ENCODE measurements at regions of chr9 and their contacts with region 1.

Region 1: DNA sequence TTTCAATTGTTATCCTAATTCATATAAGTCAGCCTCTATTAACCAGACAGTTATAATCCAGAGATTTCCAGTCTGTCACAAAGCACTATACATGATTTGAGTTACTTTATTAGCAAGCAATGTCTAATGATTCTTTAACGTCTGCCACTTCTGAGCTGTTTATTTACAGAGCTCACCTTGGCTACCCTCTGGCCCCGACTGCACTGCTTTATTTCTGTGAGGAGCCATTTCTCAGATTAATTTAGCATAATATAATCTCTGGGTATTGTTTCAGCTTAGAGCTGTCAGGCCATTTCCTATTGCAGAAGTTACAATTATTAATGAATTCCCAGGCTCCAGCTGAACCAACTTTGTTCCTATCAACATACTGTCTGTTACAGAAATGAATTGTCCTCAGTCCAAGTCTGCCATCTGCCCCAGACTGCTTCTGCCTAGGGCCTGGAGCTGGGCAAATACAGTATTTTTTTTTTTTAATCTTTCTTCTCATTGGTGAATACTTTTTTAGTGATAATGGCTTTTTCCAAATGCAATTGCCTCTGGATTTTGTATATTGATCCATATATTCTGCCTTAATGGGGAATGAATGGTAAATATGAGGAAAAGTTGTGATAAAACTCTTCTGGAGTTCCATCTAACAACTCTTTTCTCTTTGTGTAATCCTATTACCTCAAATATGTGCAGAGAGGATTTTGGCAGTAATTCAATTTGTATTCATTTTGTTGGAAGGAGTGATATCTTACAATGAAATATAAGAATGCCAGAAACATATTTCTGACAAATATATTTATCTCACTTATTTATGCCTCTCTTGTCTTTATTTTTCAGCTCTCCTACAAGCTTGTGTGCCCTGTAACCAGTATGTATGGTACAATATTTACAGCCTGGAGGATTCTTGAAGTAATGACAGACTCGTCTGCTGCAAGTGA is 104.7 kb downstream of the FOCAD start:
- DNase-seq: peak in 1 of 7 donors; percentile 8
- H3K4me3 ChIP-seq: no peak overlapping the region
- H3K27ac ChIP-seq: no peak overlapping the region
- H3K4me1 ChIP-seq: no peaks in the 10 kb centered on the region
- H3K27me3 ChIP-seq: no peaks in the 10 kb centered on the region
- CTCF ChIP-seq: no peak
- POLR2A ChIP-seq: no peak

Region 2: DNA sequence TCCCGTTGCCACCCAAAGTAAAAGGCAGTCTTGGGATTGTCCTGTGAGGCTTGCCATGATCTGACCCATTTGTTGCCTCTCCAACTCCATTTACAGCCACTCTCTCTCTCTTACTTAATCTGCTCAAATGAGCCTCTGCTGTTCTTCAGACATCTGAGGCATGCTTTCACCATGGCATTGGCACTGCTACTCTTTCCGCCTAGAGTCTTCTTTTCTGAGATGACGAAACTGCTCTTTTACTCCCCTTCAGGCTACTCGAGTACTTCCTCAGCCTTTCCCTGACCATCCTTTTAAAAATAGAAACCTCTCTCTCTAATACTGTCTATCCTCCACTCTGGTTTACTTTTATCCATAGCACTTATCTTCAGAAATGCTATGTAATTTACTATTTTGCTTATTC is 95.7 kb before region 1 on chr9:
- intact Hi-C with region 1: no loop called
- DNase-seq: no peak
- H3K4me3 ChIP-seq: no peak overlapping the region
- H3K27ac ChIP-seq: no peak overlapping the region
- H3K4me1 ChIP-seq: peaks cover 0 to 27% of the 10 kb centered on the region in 2 donors
- H3K27me3 ChIP-seq: no peaks in the 10 kb centered on the region
- CTCF ChIP-seq: no peak
- POLR2A ChIP-seq: no peak

Region 3: GRCh38 chr9:20728493-20729220 is 60.1 kb before region 1 on chr9:
- intact Hi-C with region 1: loop called in 1 of 2 experiments (anchors 10 kb)
- DNase-seq: peak in 2 of 7 donors; percentile 2 to 28
- H3K4me3 ChIP-seq: no peak overlapping the region
- H3K27ac ChIP-seq: no peak overlapping the region
- H3K4me1 ChIP-seq: no peaks in the 10 kb centered on the region
- H3K27me3 ChIP-seq: no peaks in the 10 kb centered on the region
- CTCF ChIP-seq: no peak
- POLR2A ChIP-seq: no peak